Activated T-helper 1 cell treated with anti-CD3 and anti-CD28 coated beads, Interleukin-12 subunit alpha, Interleukin-12 subunit beta, Interleukin-2, Interleukin-4 antibody, amounts not matched to agents 30 ng/mL and 10 ng/mL and 1 ng/mL, durations not matched to agents 14 hours and 24 hours and 36 hours (primary cell): ENCODE measurements at regions of chr9 and their contacts with region 1.

Region 1: DNA sequence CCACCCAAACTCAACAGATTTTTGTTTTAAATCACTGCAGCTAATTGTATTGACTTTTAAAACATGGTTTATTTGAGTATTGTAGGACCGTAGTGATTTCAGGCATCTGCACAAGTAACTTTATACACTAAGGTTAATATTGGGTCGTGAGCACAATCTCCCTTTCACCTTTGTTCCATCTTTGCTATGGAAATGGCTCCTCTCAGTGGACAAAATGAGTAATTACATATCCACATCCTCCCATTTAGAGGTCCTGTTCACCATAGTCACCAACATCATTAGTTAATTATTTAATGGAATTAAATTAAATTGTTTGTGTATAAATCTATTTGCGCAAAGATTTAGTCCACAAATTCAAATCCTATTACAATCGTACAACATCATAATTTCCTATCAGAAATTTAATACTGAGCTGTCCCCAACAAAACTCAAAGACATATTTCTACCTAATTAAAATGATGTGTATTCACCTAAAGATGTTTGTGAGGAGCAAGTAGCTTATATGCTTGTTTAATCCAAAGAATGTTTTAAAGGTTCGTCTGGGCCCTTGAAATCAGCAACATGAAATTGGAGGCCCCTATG is 173.0 kb upstream of the DAPK1 start:
- DNase-seq: no peak
- H3K4me3 Mint-ChIP-seq: no peak overlapping the region
- H3K27ac Mint-ChIP-seq: no peak overlapping the region
- H3K4me1 Mint-ChIP-seq: no peaks in the 10 kb centered on the region
- H3K27me3 Mint-ChIP-seq: peaks cover 3% of the 10 kb centered on the region

Region 2: DNA sequence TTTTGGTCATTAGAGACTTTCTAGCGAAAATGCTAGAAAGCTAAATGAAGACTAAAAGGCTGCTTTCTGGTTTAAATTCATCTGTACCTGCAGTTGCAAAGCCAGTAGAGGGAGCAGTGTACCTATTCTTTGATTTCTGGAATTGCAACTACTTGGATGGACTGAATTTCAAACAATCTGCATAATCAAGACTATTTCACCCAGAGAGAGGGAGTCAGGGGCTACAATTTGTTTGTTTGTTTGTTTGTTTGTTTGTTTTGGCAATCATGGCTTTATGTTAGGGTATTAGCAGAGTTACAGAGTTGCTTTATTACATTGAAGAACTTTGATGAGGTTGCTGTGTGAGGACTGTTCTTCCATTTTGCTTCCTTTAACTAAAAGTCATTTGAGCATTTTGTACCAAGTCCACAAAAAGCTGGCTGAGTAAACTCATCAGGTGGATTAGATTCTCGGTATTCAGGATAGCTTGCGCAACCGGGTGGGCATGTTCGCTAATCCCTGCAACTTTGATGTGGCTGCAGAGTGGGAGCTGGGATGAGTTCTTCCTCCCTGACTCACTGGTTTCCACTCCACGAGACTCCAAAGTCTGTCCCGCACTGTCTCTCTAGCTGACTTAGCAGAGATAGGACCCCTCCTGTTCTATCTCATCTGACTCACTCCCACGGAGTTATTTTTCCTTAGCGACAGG is 890.5 kb before region 1 on chr9:
- intact Hi-C with region 1: loop called (anchors 1 kb)
- DNase-seq: no peak
- H3K4me3 Mint-ChIP-seq: no peak overlapping the region
- H3K27ac Mint-ChIP-seq: no peak overlapping the region
- H3K4me1 Mint-ChIP-seq: no peaks in the 10 kb centered on the region
- H3K27me3 Mint-ChIP-seq: peaks cover 8% of the 10 kb centered on the region

Region 3: GRCh38 chr9:86614871-86615849 is 709.5 kb before region 1 on chr9:
- intact Hi-C with region 1: loop called (anchors 2 kb)
- DNase-seq: no peak
- H3K4me3 Mint-ChIP-seq: no peak overlapping the region
- H3K27ac Mint-ChIP-seq: no peak overlapping the region
- H3K4me1 Mint-ChIP-seq: no peaks in the 10 kb centered on the region
- H3K27me3 Mint-ChIP-seq: no peaks in the 10 kb centered on the region

Region 4: DNA sequence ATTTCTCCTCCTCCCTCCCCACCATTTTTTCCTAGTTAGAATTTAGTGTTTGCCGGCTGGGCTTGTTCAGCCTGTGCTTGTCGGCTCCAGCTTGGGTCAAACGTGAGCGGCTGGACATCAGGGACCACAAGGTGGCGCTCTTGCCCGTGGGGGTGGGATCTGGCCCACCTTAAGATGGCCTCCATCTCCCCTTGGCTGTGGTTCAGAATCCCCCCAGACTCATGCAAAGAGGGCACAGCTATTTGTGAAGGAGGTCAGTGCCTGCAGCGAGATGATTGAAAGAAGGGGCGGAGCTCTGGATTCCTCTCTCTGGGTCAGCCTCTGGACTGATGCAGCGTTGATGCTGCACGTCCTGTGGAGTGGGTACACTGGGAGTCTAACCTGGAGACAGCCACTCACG is 687.2 kb before region 1 on chr9:
- intact Hi-C with region 1: loop called (anchors 1 kb)
- DNase-seq: no peak
- H3K4me3 Mint-ChIP-seq: no peak overlapping the region
- H3K27ac Mint-ChIP-seq: no peak overlapping the region
- H3K4me1 Mint-ChIP-seq: no peaks in the 10 kb centered on the region
- H3K27me3 Mint-ChIP-seq: peaks cover 2% of the 10 kb centered on the region